ENCODE measurements at regions of chr14 and their contacts with region 1.

Region 1: DNA sequence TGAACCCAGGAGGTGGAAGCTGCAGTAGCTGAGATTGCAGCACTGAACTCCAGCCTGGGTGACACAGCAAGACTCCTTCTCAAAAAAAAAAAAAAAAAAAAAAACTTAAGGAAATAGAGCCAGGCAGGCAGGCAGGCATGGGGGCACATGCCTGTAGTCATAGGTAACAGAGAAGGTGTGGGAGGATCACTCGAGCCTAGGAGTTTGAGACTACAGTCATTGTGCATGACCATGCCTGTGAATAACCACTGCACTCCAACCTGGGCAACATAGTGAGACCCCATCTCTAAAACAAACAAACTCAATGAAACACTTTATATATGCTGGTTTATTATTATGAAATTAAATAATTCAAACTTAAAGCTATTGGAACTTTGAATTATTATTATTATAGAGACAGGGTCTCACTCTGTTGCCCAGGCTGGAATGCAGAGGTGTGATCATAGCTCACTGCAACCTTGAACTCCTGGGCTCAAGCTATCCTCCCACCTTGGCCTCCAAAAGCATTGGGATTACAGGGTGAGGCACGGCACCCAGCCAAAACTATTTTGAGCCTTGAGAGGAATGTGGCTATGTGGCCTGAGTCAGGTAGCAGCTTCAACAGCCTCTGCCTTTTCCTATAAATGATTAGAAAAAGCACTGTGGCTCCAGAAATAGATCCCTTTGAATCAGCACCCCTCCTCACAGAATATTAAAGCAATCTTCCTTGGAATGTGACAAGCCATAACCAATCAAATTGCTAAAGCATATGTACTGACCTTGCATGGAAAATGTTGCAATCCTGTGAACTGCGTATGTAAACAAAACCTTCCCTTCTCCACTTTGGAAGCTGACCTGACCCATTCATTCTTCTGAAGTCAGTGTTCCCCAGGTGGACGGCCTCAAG is 34.8 kb upstream of the YY1 start:
- DNase-seq: peak in 1 of 2 experiments; percentile 81
- H3K4me3 ChIP-seq: no peak overlapping the region
- H3K27ac ChIP-seq: peak overlapping the region; percentile 54
- H3K4me1 ChIP-seq: peaks cover 4% of the 10 kb centered on the region; the same call in 1 of the 2 replicates
- H3K27me3 ChIP-seq: no peaks in the 10 kb centered on the region
- CTCF ChIP-seq: no peak

Region 2: DNA sequence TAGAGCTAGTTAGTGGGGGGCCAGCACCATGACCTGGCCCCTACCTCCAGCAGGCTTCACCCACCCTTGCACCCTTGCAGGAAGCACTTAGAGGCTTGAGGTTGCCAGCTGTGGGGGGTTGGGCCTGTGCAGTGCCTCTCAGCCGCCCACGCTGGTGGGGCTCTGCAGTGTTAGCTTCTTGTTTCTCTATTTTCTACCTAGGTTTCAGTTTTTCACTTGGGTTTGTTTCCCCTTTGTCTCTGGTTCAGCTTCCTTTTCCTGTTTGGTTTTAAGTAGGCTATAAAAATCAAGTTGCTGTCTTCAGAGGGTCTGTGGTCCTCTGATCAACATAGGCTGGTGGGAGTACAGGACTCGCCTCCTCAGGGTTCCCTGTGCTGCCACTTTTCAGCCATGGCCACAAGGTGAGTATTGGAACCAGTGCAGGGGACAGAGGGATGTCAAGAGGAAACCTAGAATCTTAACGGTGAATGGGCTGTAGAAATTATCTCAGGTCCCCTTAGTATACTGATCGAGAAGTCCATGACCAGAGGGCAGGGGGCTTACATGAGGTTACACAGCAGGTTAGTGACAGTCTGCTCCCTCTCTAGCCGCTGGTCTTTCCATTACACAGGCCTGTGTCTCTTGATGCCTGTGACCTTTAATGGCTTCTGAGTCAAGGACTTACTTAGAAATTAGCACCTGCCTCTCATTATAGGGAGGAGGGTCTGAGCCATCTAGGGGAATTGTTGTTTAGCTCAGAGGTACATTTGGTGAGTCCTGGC is 138.9 kb before region 1 on chr14 and contains the start of gene EVL:
- CTCF ChIA-PET with region 1: no interaction called
- POLR2A ChIA-PET with region 1: no interaction called
- intact Hi-C with region 1: no loop called
- DNase-seq: no peak
- H3K4me3 ChIP-seq: no peak within 1 kb of the TSS
- H3K27ac ChIP-seq: no peak within 1 kb of the TSS
- H3K4me1 ChIP-seq: peaks cover 35% of the 10 kb centered on the region
- H3K27me3 ChIP-seq: no peaks in the 10 kb centered on the region
- CTCF ChIP-seq: no peak
- total RNA-seq, gene EVL: 4.9 and 5.9 TPM in 2 replicates

Region 3: DNA sequence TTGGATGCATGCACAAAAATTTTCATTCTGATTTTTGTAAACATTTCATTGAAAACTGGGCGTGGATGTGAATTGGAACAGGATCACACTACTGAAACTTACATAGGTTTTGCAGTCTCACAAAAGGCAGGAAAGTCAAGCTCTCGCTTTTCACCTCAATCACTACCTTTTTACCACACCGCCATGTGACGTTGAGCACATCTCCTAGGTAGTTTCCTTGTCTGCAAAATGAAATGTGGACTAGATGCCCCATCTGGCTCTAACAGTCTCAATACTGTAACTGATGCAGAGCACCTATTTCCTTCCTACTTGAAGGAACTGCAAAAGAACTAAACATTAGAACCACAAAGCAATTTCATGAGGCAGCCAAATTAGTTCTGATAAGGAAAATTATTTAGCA is 30.3 kb after region 1 on chr14:
- CTCF ChIA-PET with region 1: interaction called, 14 read pairs
- POLR2A ChIA-PET with region 1: no interaction called
- intact Hi-C with region 1: no loop called
- DNase-seq: no peak
- H3K4me3 ChIP-seq: no peak overlapping the region
- H3K27ac ChIP-seq: no peak overlapping the region
- H3K4me1 ChIP-seq: peaks cover 13% of the 10 kb centered on the region
- H3K27me3 ChIP-seq: no peaks in the 10 kb centered on the region
- CTCF ChIP-seq: no peak

Measured in PC-9 (cell line).